ENCODE measurements at regions of chr10 and their contacts with region 1.

Region 1: GRCh38 chr10:103917326-103918052 is 495 bp downstream of the STN1 start:
- DNase-seq: no peak
- H3K4me3 ChIP-seq: peak overlapping the region; percentile 75
- H3K27ac ChIP-seq: peak overlapping the region; percentile 88
- H3K4me1 ChIP-seq: peaks cover 14% of the 10 kb centered on the region
- H3K27me3 ChIP-seq: no peaks in the 10 kb centered on the region
- CTCF ChIP-seq: no peak

Region 2: DNA sequence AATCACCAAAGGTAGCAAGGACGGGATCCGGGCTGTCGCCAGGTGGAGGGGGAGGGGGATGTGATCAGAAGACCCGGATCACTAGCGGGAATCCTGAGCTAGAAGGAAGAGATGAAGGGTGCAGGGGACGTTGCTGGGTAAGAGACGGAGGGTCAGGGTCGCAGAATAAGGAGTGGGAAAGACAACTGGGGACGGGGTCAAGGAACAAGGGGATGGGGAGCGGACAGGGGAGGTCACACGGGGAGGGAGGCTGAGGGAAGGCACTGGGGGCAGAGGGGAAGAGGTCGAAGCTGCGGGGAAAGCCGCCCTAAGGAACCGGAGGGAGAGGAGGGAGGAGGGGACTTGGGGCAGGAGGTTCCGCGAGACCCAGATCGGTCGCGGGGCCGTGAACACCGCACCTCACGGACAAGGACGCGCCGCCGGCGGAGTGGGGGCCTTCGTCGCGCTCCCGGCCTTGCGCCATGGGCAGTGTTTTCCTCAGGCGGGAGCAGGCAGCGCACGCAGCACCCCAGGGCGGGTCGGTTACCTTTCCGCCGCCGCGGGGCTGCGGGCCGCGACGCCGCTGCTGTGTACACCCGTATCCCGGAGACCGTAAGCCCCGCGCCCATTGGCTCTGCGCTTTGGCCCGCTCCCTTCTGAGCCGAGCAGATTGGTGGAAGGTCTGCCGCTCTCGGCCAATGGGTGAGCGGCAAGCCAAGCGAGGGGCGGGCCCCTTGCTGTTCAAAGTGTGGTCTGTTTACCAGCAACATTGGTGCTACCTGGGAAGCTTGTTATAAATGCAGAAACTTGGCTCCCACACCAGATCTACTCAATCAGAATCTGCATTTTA is 314.5 kb after region 1 on chr10 and contains the start of gene CFAP43:
- CTCF ChIA-PET with region 1: no interaction called
- POLR2A ChIA-PET with region 1: interaction called, 15 read pairs
- intact Hi-C with region 1: no loop called
- DNase-seq: peak; percentile 98
- H3K4me3 ChIP-seq: peak within 1 kb of the TSS; percentile 70
- H3K27ac ChIP-seq: peak within 1 kb of the TSS; percentile 45
- H3K4me1 ChIP-seq: peaks cover 6% of the 10 kb centered on the region
- H3K27me3 ChIP-seq: peaks cover 6% of the 10 kb centered on the region
- CTCF ChIP-seq: no peak
- total RNA-seq, gene CFAP43: 0.13 and 0.35 TPM in 2 replicates

Measured in A673 (cell line).